ENCODE measurements at regions of chr7 and their contacts with region 1.

Region 1: GRCh38 chr7:136000288-136000913 is 23.2 kb upstream of the MTPN start:
- DNase-seq: no peak
- ATAC-seq: no peak
- H3K4me3 ChIP-seq: no peak overlapping the region
- H3K27ac ChIP-seq: no peak overlapping the region
- H3K4me1 ChIP-seq: no peaks in the 10 kb centered on the region
- H3K27me3 ChIP-seq: no peaks in the 10 kb centered on the region
- CTCF ChIP-seq: no peak
- EP300 ChIP-seq: no peak
- POLR2A ChIP-seq: no peak
- RAD21 ChIP-seq: no peak

Region 2: DNA sequence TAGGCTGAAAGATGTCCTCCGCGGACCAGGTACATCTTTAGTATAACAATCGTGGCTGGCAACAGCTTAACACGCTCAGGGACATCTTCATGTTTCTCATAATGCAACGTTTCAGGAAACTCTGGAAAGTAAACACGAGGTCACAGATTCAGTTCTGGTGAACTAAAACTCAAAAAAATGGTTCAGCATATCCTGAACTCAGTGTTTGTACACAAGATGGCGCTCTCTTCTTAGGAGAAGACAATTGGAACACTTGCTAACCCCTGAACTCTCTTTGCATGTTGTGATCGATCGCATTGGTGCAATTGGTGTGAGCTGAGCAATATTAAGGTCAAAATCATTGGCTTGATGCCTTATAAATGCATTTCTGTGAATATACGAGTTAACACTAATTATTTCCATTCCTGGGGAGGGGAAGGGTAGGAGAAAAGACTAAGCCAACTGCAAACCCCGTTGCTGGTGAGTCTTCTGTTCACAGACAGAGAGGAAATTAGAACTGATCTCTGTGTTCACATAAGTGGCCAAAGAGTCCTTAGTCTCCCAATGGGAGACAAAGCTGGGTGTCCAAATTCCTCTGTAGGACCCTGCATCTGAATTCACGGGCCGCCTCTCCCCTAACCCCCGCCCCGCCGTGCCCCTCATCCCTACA is 199.2 kb before region 1 on chr7:
- CTCF ChIA-PET with region 1: interaction called, 13 read pairs
- POLR2A ChIA-PET with region 1: no interaction called
- RAD21 ChIA-PET with region 1: no interaction called
- SMC1A ChIA-PET with region 1: no interaction called
- in situ Hi-C with region 1: loop called (anchors 5 kb)
- intact Hi-C with region 1: no loop called
- DNase-seq: peak; percentile 35
- ATAC-seq: peak; percentile 91
- H3K4me3 ChIP-seq: no peak overlapping the region
- H3K27ac ChIP-seq: no peak overlapping the region
- H3K4me1 ChIP-seq: no peaks in the 10 kb centered on the region
- H3K27me3 ChIP-seq: 0 out of 4 replicates have a peak, but pooled peaks cover 0 to 2% of the 10 kb centered on the region in 2 experiments
- CTCF ChIP-seq: peak; percentile 71 to 87 (median 86)
- EP300 ChIP-seq: no peak
- POLR2A ChIP-seq: no peak
- RAD21 ChIP-seq: peak; percentile 99

Region 3: GRCh38 chr7:136205956-136206355 is 205.6 kb after region 1 on chr7:
- CTCF ChIA-PET with region 1: no interaction called
- POLR2A ChIA-PET with region 1: no interaction called
- RAD21 ChIA-PET with region 1: no interaction called
- SMC1A ChIA-PET with region 1: no interaction called
- in situ Hi-C with region 1: no loop called
- intact Hi-C with region 1: no loop called
- DNase-seq: no peak
- ATAC-seq: no peak
- H3K4me3 ChIP-seq: no peak overlapping the region
- H3K27ac ChIP-seq: no peak overlapping the region
- H3K4me1 ChIP-seq: no peaks in the 10 kb centered on the region
- H3K27me3 ChIP-seq: no peaks in the 10 kb centered on the region
- CTCF ChIP-seq: no peak
- EP300 ChIP-seq: no peak
- POLR2A ChIP-seq: no peak
- RAD21 ChIP-seq: no peak

Region 4: GRCh38 chr7:136405931-136406777 is 405.8 kb after region 1 on chr7:
- CTCF ChIA-PET with region 1: no interaction called
- POLR2A ChIA-PET with region 1: no interaction called
- RAD21 ChIA-PET with region 1: no interaction called
- SMC1A ChIA-PET with region 1: no interaction called
- in situ Hi-C with region 1: no loop called
- intact Hi-C with region 1: no loop called
- DNase-seq: no peak
- ATAC-seq: peak; percentile 98
- H3K4me3 ChIP-seq: no peak overlapping the region
- H3K27ac ChIP-seq: no peak overlapping the region
- H3K4me1 ChIP-seq: no peaks in the 10 kb centered on the region
- H3K27me3 ChIP-seq: no peaks in the 10 kb centered on the region
- CTCF ChIP-seq: peak; percentile 56 to 84 (median 81)
- EP300 ChIP-seq: no peak
- POLR2A ChIP-seq: no peak
- RAD21 ChIP-seq: peak; percentile 56